CD4-positive, alpha-beta T cell (primary cell): ENCODE measurements at regions of chr12 and their contacts with region 1.

Region 1: DNA sequence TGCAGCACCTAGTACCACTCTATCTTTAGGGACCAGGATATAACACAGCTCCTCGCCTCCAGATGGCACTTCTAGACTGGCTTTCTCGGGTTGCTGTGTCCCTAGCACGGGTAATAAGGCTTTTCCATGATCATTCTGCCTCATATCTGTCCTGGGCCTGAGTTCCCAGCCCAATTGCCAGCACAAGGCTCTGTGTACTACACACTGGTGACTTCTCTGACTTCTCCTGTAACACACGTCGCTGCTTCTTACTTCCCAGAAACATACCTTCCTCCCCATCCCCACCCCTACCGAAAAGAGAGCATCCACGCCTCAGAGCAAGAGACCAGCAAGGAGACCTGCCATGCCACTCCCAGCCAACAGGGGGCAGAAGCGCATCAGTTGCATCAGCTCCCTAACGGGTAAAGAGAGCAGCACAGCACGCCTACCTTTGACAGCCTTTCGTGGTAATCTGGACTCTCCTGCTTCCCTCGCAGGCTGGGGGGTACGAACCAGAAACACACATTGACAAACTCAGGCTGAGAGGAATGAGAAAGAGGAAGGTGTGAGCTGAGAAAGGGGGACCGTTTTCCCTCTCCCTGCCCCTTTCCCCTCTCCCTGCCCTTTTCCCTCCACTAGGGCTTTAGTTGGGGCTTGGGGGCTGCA is 21.2 kb upstream of the ZNF740 start:
- DNase-seq: peak; percentile 82 to 94 (median 90)
- ATAC-seq: peak; percentile 100
- H3K4me3 ChIP-seq: no peak overlapping the region
- H3K4me3 Mint-ChIP-seq: no peak overlapping the region
- H3K27ac ChIP-seq: no peak overlapping the region
- H3K27ac Mint-ChIP-seq: no peak overlapping the region
- H3K4me1 ChIP-seq: peaks cover 10% of the 10 kb centered on the region
- H3K4me1 Mint-ChIP-seq: peaks cover 7% of the 10 kb centered on the region
- H3K27me3 ChIP-seq: no peaks in the 10 kb centered on the region
- H3K27me3 Mint-ChIP-seq: no peaks in the 10 kb centered on the region
- CTCF ChIP-seq: peak; percentile 94

Region 2: GRCh38 chr12:53190108-53190729 is 30.9 kb after region 1 on chr12:
- CTCF ChIA-PET with region 1: interaction called, 32 read pairs
- POLR2A ChIA-PET with region 1: interaction called, 4 read pairs
- intact Hi-C with region 1: loop called (anchors 1 to 2 kb)
- DNase-seq: peak in 13 of 14 experiments; percentile 33 to 78 (median 46)
- ATAC-seq: peak; percentile 98
- H3K4me3 ChIP-seq: no peak overlapping the region
- H3K4me3 Mint-ChIP-seq: no peak overlapping the region
- H3K27ac ChIP-seq: no peak overlapping the region
- H3K27ac Mint-ChIP-seq: peak overlapping the region; percentile 68
- H3K4me1 ChIP-seq: peaks cover 20% of the 10 kb centered on the region
- H3K4me1 Mint-ChIP-seq: peaks cover 32% of the 10 kb centered on the region
- H3K27me3 ChIP-seq: no peaks in the 10 kb centered on the region
- H3K27me3 Mint-ChIP-seq: no peaks in the 10 kb centered on the region
- CTCF ChIP-seq: peak; percentile 76

Region 3: GRCh38 chr12:53205747-53206419 is 46.6 kb after region 1 on chr12:
- CTCF ChIA-PET with region 1: interaction called, 32 read pairs
- POLR2A ChIA-PET with region 1: interaction called, 6 read pairs
- intact Hi-C with region 1: no loop called
- DNase-seq: peak in 11 of 14 experiments; percentile 31 to 75 (median 55)
- ATAC-seq: peak; percentile 43
- H3K4me3 ChIP-seq: peak overlapping the region; percentile 84
- H3K4me3 Mint-ChIP-seq: peak overlapping the region; percentile 84
- H3K27ac ChIP-seq: peak overlapping the region; percentile 70 to 82
- H3K27ac Mint-ChIP-seq: peak overlapping the region; percentile 73
- H3K4me1 ChIP-seq: peaks cover 90% of the 10 kb centered on the region
- H3K4me1 Mint-ChIP-seq: peaks cover 72% of the 10 kb centered on the region
- H3K27me3 ChIP-seq: no peaks in the 10 kb centered on the region
- H3K27me3 Mint-ChIP-seq: no peaks in the 10 kb centered on the region
- CTCF ChIP-seq: no peak

Region 4: GRCh38 chr12:53251477-53252348 is 92.4 kb after region 1 on chr12:
- CTCF ChIA-PET with region 1: interaction called, 10 read pairs
- POLR2A ChIA-PET with region 1: no interaction called
- intact Hi-C with region 1: no loop called
- DNase-seq: peak; percentile 43 to 87 (median 65)
- ATAC-seq: peak; percentile 86
- H3K4me3 ChIP-seq: peak overlapping the region; percentile 89
- H3K4me3 Mint-ChIP-seq: peak overlapping the region; percentile 99
- H3K27ac ChIP-seq: peak overlapping the region; percentile 50 to 74
- H3K27ac Mint-ChIP-seq: peak overlapping the region; percentile 93
- H3K4me1 ChIP-seq: peaks cover 51% of the 10 kb centered on the region
- H3K4me1 Mint-ChIP-seq: peaks cover 52% of the 10 kb centered on the region
- H3K27me3 ChIP-seq: no peaks in the 10 kb centered on the region
- H3K27me3 Mint-ChIP-seq: no peaks in the 10 kb centered on the region
- CTCF ChIP-seq: peak; percentile 57

Region 5: DNA sequence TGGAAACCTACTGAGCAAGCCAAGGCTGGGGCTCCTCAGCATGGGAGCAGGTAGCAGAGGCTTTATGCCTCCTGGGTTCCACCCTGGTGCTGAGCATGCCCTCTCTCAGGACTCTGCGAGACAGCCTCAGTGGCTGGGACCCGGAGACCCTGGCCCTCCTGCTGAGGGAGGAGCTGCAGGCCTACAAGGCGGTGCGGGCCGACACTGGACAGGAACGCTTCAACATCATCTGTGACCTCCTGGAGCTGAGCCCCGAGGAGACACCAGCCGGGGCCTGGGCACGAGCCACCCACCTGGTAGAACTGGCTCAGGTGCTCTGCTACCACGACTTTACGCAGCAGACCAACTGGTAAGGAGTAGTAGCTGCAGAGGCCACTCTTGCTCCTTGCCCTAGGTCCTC is 117.2 kb after region 1 on chr12:
- CTCF ChIA-PET with region 1: no interaction called
- POLR2A ChIA-PET with region 1: no interaction called
- intact Hi-C with region 1: no loop called
- DNase-seq: no peak
- ATAC-seq: no peak
- H3K4me3 ChIP-seq: no peak overlapping the region
- H3K4me3 Mint-ChIP-seq: no peak overlapping the region
- H3K27ac ChIP-seq: no peak overlapping the region
- H3K27ac Mint-ChIP-seq: no peak overlapping the region
- H3K4me1 ChIP-seq: no peaks in the 10 kb centered on the region
- H3K4me1 Mint-ChIP-seq: no peaks in the 10 kb centered on the region
- H3K27me3 ChIP-seq: no peaks in the 10 kb centered on the region
- H3K27me3 Mint-ChIP-seq: no peaks in the 10 kb centered on the region
- CTCF ChIP-seq: no peak

Region 6: DNA sequence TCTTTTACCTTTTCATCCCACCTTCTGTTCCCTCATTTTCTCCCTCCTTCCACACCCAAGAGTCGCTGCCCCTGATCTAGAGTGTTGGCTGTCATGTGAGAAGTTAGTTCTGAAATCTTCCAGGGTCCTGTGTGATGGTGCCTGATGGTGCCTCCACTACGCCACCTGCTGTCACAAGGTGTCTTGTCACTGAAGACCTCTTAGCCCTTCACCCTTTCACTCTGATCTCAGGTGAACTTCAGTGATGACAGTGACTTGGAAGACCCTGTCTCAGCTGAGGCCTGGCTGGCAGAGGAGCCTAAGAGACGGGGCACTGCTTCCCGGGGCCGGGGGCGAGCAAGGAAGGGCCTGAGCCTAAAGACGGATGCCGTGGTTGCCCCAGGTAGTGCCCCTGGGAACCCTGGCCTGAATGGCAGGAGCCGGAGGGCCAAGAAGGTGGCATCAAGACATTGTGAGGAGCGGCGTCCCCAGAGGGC is 128.5 kb after region 1 on chr12:
- CTCF ChIA-PET with region 1: interaction called, 3 read pairs
- POLR2A ChIA-PET with region 1: interaction called, 7 read pairs
- intact Hi-C with region 1: loop called (anchors 1 kb)
- DNase-seq: peak; percentile 60 to 88 (median 70)
- ATAC-seq: peak; percentile 98
- H3K4me3 ChIP-seq: no peak overlapping the region
- H3K4me3 Mint-ChIP-seq: no peak overlapping the region
- H3K27ac ChIP-seq: no peak overlapping the region
- H3K27ac Mint-ChIP-seq: peak overlapping the region; percentile 0
- H3K4me1 ChIP-seq: peaks cover 6% of the 10 kb centered on the region
- H3K4me1 Mint-ChIP-seq: peaks cover 5% of the 10 kb centered on the region
- H3K27me3 ChIP-seq: no peaks in the 10 kb centered on the region
- H3K27me3 Mint-ChIP-seq: no peaks in the 10 kb centered on the region
- CTCF ChIP-seq: peak; percentile 81

Region 7: GRCh38 chr12:53344824-53345485 is 185.6 kb after region 1 on chr12:
- CTCF ChIA-PET with region 1: interaction called, 5 read pairs
- POLR2A ChIA-PET with region 1: no interaction called
- intact Hi-C with region 1: loop called in 1 of 2 experiments (anchors 1 kb)
- DNase-seq: peak; percentile 51 to 85 (median 65)
- ATAC-seq: peak; percentile 80
- H3K4me3 ChIP-seq: peak overlapping the region; percentile 66
- H3K4me3 Mint-ChIP-seq: peak overlapping the region; percentile 93
- H3K27ac ChIP-seq: no peak overlapping the region
- H3K27ac Mint-ChIP-seq: peak overlapping the region; percentile 72
- H3K4me1 ChIP-seq: peaks cover 15% of the 10 kb centered on the region
- H3K4me1 Mint-ChIP-seq: peaks cover 21% of the 10 kb centered on the region
- H3K27me3 ChIP-seq: peaks cover 2 to 3% of the 10 kb centered on the region in 2 experiments
- H3K27me3 Mint-ChIP-seq: peaks cover 3% of the 10 kb centered on the region
- CTCF ChIP-seq: peak; percentile 81